ENCODE measurements at regions of chr6 and their contacts with region 1.

Region 1: GRCh38 chr6:118709859-118710350 is 58.5 kb upstream of the CEP85L start:
- DNase-seq: peak; percentile 41 to 94 (median 61)
- ATAC-seq: peak; percentile 90
- H3K4me3 ChIP-seq: peak overlapping the region; percentile 83
- H3K4me3 Mint-ChIP-seq: peak overlapping the region; percentile 98
- H3K27ac ChIP-seq: peak overlapping the region; percentile 73 to 78
- H3K27ac Mint-ChIP-seq: peak overlapping the region; percentile 97
- H3K4me1 ChIP-seq: peaks cover 53% of the 10 kb centered on the region
- H3K4me1 Mint-ChIP-seq: peaks cover 82% of the 10 kb centered on the region
- H3K27me3 ChIP-seq: no peaks in the 10 kb centered on the region
- H3K27me3 Mint-ChIP-seq: no peaks in the 10 kb centered on the region
- CTCF ChIP-seq: no peak

Region 2: GRCh38 chr6:118495485-118496280 is 214.2 kb before region 1 on chr6:
- CTCF ChIA-PET with region 1: no interaction called
- POLR2A ChIA-PET with region 1: no interaction called
- intact Hi-C with region 1: no loop called
- DNase-seq: no peak
- ATAC-seq: no peak
- H3K4me3 ChIP-seq: no peak overlapping the region
- H3K4me3 Mint-ChIP-seq: no peak overlapping the region
- H3K27ac ChIP-seq: no peak overlapping the region
- H3K27ac Mint-ChIP-seq: no peak overlapping the region
- H3K4me1 ChIP-seq: no peaks in the 10 kb centered on the region
- H3K4me1 Mint-ChIP-seq: peaks cover 8% of the 10 kb centered on the region
- H3K27me3 ChIP-seq: no peaks in the 10 kb centered on the region
- H3K27me3 Mint-ChIP-seq: no peaks in the 10 kb centered on the region
- CTCF ChIP-seq: no peak

Region 3: DNA sequence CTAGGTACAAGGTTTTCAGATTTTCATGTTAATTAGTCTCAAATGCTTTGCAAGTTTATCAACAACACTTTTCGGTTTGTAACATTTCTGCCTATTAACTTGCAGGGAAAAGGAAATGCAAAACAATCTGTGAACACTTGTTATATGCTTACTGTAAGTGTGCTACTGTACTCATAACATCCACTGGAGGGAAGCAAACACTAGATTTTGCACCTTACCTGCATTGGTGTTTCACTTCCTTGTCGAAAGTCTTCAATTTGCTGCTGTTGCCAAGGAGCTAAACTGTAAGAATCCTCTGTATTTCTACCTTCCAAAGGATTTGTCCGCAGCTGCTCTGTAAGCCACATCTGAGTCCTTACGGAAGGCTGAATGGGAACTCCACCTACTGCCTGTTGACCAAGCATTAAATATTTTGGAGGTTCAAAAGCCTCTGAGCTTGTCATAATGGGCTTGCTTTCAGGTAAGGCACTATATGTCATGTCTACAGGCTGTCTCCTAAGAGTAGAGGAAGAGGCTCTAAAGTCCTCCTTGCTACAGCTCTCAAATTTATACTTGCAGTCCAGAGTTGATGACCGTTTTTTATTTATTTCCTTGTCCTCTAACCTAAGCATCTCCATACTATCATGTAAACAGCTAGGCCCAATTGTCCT is 144.5 kb before region 1 on chr6:
- CTCF ChIA-PET with region 1: interaction called, 3 read pairs
- POLR2A ChIA-PET with region 1: interaction called, 12 read pairs
- intact Hi-C with region 1: no loop called
- DNase-seq: peak in 5 of 14 experiments; percentile 22 to 81 (median 75)
- ATAC-seq: peak; percentile 97
- H3K4me3 ChIP-seq: no peak overlapping the region
- H3K4me3 Mint-ChIP-seq: no peak overlapping the region
- H3K27ac ChIP-seq: peak overlapping the region in 1 of 2 donors; percentile 5
- H3K27ac Mint-ChIP-seq: peak overlapping the region; percentile 72
- H3K4me1 ChIP-seq: peaks cover 7% of the 10 kb centered on the region
- H3K4me1 Mint-ChIP-seq: peaks cover 43% of the 10 kb centered on the region
- H3K27me3 ChIP-seq: no peaks in the 10 kb centered on the region
- H3K27me3 Mint-ChIP-seq: no peaks in the 10 kb centered on the region
- CTCF ChIP-seq: peak; percentile 63

Region 4: GRCh38 chr6:118660218-118660569 is 49.7 kb before region 1 on chr6:
- CTCF ChIA-PET with region 1: interaction called, 3 read pairs
- POLR2A ChIA-PET with region 1: interaction called, 29 read pairs
- intact Hi-C with region 1: loop called in 1 of 2 experiments (anchors 2 kb)
- DNase-seq: peak; percentile 35 to 88 (median 51)
- ATAC-seq: peak; percentile 65
- H3K4me3 ChIP-seq: no peak overlapping the region
- H3K4me3 Mint-ChIP-seq: peak overlapping the region; percentile 63
- H3K27ac ChIP-seq: peak overlapping the region in 1 of 2 donors; percentile 18
- H3K27ac Mint-ChIP-seq: peak overlapping the region; percentile 83
- H3K4me1 ChIP-seq: peaks cover 37% of the 10 kb centered on the region
- H3K4me1 Mint-ChIP-seq: peaks cover 74% of the 10 kb centered on the region
- H3K27me3 ChIP-seq: no peaks in the 10 kb centered on the region
- H3K27me3 Mint-ChIP-seq: no peaks in the 10 kb centered on the region
- CTCF ChIP-seq: no peak

Region 5: GRCh38 chr6:118697554-118697953 is 12.4 kb before region 1 on chr6:
- CTCF ChIA-PET with region 1: interaction called, 9 read pairs
- POLR2A ChIA-PET with region 1: interaction called, 31 read pairs
- intact Hi-C with region 1: no loop called
- DNase-seq: peak in 5 of 14 experiments; percentile 12 to 44 (median 27)
- ATAC-seq: peak; percentile 68
- H3K4me3 ChIP-seq: no peak overlapping the region
- H3K4me3 Mint-ChIP-seq: no peak overlapping the region
- H3K27ac ChIP-seq: no peak overlapping the region
- H3K27ac Mint-ChIP-seq: peak overlapping the region; percentile 31
- H3K4me1 ChIP-seq: peaks cover 10% of the 10 kb centered on the region
- H3K4me1 Mint-ChIP-seq: peaks cover 90% of the 10 kb centered on the region
- H3K27me3 ChIP-seq: no peaks in the 10 kb centered on the region
- H3K27me3 Mint-ChIP-seq: no peaks in the 10 kb centered on the region
- CTCF ChIP-seq: no peak

Region 6: GRCh38 chr6:118768904-118769325 is 59.0 kb after region 1 on chr6:
- CTCF ChIA-PET with region 1: interaction called, 3 read pairs
- POLR2A ChIA-PET with region 1: interaction called, 20 read pairs
- intact Hi-C with region 1: no loop called
- DNase-seq: peak in 5 of 14 experiments; percentile 7 to 53 (median 34)
- ATAC-seq: peak; percentile 59
- H3K4me3 ChIP-seq: no peak overlapping the region
- H3K4me3 Mint-ChIP-seq: peak overlapping the region; percentile 27
- H3K27ac ChIP-seq: peak overlapping the region; percentile 47 to 51
- H3K27ac Mint-ChIP-seq: peak overlapping the region; percentile 78
- H3K4me1 ChIP-seq: peaks cover 15% of the 10 kb centered on the region
- H3K4me1 Mint-ChIP-seq: peaks cover 29% of the 10 kb centered on the region
- H3K27me3 ChIP-seq: no peaks in the 10 kb centered on the region
- H3K27me3 Mint-ChIP-seq: no peaks in the 10 kb centered on the region
- CTCF ChIP-seq: no peak

Region 7: DNA sequence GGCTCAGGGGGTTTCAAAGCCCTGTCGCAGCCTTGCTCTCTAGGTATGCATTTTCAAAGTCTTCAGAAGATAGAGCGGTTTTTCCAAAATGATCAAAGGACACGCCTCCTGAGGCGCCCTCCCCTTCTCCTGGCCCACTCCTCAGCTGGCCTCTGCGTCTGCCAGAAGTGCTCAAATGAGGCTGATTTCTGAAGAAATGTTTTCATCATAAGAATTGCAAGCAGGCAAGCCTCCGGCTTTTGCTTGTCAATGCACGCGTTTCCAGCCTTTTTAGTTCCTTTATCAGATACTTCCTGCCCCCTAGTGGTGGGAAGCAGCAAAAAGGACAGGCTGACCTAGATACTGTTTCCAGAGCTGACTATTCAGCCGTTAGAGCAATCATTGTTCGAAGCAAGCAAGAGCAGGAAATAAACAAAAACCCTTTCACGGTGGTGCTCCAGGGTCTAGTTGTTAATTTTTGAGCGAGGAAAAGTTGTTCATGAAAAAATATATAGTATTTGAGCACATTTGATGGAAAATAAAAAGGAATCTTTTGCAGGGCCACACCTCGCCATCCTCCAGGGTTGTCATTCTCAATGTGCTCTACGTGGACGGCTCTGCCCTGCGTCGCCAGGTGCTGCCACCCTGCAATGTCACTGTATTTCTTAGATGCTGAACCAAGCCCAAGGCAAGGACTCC is 90.6 kb after region 1 on chr6:
- CTCF ChIA-PET with region 1: interaction called, 6 read pairs
- POLR2A ChIA-PET with region 1: interaction called, 10 read pairs
- intact Hi-C with region 1: no loop called
- DNase-seq: peak; percentile 66 to 94 (median 78)
- ATAC-seq: peak; percentile 92
- H3K4me3 ChIP-seq: peak overlapping the region; percentile 11
- H3K4me3 Mint-ChIP-seq: peak overlapping the region; percentile 71
- H3K27ac ChIP-seq: peak overlapping the region; percentile 7
- H3K27ac Mint-ChIP-seq: peak overlapping the region; percentile 83
- H3K4me1 ChIP-seq: peaks cover 32% of the 10 kb centered on the region
- H3K4me1 Mint-ChIP-seq: peaks cover 48% of the 10 kb centered on the region
- H3K27me3 ChIP-seq: no peaks in the 10 kb centered on the region
- H3K27me3 Mint-ChIP-seq: no peaks in the 10 kb centered on the region
- CTCF ChIP-seq: peak; percentile 83

Region 8: GRCh38 chr6:118843685-118844390 is 133.9 kb after region 1 on chr6:
- CTCF ChIA-PET with region 1: no interaction called
- POLR2A ChIA-PET with region 1: no interaction called
- intact Hi-C with region 1: no loop called
- DNase-seq: no peak
- ATAC-seq: no peak
- H3K4me3 ChIP-seq: no peak overlapping the region
- H3K4me3 Mint-ChIP-seq: no peak overlapping the region
- H3K27ac ChIP-seq: no peak overlapping the region
- H3K27ac Mint-ChIP-seq: no peak overlapping the region
- H3K4me1 ChIP-seq: peaks cover 4% of the 10 kb centered on the region
- H3K4me1 Mint-ChIP-seq: peaks cover 19% of the 10 kb centered on the region
- H3K27me3 ChIP-seq: no peaks in the 10 kb centered on the region
- H3K27me3 Mint-ChIP-seq: no peaks in the 10 kb centered on the region
- CTCF ChIP-seq: no peak